ENCODE measurements at regions of chr10 and their contacts with region 1.

Region 1: DNA sequence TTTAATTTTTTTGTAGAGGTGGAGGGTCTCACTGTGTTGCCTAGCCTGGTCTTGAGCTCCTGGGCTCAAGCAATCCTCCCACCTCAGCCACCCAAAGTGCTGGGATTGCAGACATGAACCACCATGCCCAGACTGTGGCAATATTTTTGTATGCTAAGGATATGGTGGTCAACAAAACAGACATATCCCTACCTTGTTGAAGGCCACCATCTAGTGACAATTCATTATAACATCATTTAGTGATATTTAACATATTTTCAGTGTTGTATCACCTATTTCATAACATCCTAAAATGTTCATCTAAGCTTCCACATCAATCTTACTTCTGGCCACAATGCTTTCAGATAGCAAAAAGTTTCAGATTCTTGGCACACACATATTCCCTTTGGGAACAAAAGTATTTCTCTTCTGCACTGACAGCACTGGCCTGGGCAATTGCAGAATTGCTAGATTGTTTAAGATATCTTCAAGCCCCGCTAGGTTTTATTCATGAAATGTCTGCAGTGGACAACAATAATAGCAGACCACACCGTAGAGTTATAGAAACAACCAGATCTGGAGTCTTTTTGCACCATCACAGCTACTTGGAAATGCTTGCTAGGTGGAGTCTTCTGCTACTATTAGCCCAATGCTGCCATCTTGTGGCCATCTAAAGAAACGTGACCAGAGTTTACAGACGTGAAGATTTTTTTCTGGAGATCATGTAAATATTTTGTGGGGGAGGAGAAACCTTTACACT is 58.4 kb downstream of the DNAJC12 start:
- DNase-seq: peak; percentile 86
- ATAC-seq: peak; percentile 75
- H3K4me3 Mint-ChIP-seq: no peak overlapping the region
- H3K27ac Mint-ChIP-seq: no peak overlapping the region
- H3K4me1 Mint-ChIP-seq: peaks cover 46% of the 10 kb centered on the region
- H3K27me3 Mint-ChIP-seq: no peaks in the 10 kb centered on the region

Region 2: GRCh38 chr10:67612577-67613537 is 166.8 kb before region 1 on chr10:
- CTCF ChIA-PET with region 1: interaction called, 13 read pairs
- POLR2A ChIA-PET with region 1: no interaction called
- DNase-seq: peak; percentile 81
- ATAC-seq: peak; percentile 99
- H3K4me3 Mint-ChIP-seq: peak overlapping the region; percentile 45
- H3K27ac Mint-ChIP-seq: peak overlapping the region; percentile 82
- H3K4me1 Mint-ChIP-seq: peaks cover 24% of the 10 kb centered on the region
- H3K27me3 Mint-ChIP-seq: peaks cover 16% of the 10 kb centered on the region

Region 3: GRCh38 chr10:67666416-67667034 is 113.1 kb before region 1 on chr10:
- CTCF ChIA-PET with region 1: interaction called, 107 read pairs
- POLR2A ChIA-PET with region 1: no interaction called
- DNase-seq: no peak
- ATAC-seq: no peak
- H3K4me3 Mint-ChIP-seq: no peak overlapping the region
- H3K27ac Mint-ChIP-seq: no peak overlapping the region
- H3K4me1 Mint-ChIP-seq: no peaks in the 10 kb centered on the region
- H3K27me3 Mint-ChIP-seq: peaks cover 3% of the 10 kb centered on the region

Region 4: GRCh38 chr10:67705921-67706320 is 73.7 kb before region 1 on chr10:
- CTCF ChIA-PET with region 1: interaction called, 18 read pairs
- POLR2A ChIA-PET with region 1: no interaction called
- DNase-seq: no peak
- ATAC-seq: no peak
- H3K4me3 Mint-ChIP-seq: no peak overlapping the region
- H3K27ac Mint-ChIP-seq: no peak overlapping the region
- H3K4me1 Mint-ChIP-seq: no peaks in the 10 kb centered on the region
- H3K27me3 Mint-ChIP-seq: peaks cover 22% of the 10 kb centered on the region

Region 5: GRCh38 chr10:67764012-67764822 is 15.4 kb before region 1 on chr10:
- CTCF ChIA-PET with region 1: interaction called, 98 read pairs
- POLR2A ChIA-PET with region 1: interaction called, 13 read pairs
- DNase-seq: peak; percentile 97
- ATAC-seq: peak; percentile 85
- H3K4me3 Mint-ChIP-seq: peak overlapping the region; percentile 86
- H3K27ac Mint-ChIP-seq: peak overlapping the region; percentile 98
- H3K4me1 Mint-ChIP-seq: peaks cover 31% of the 10 kb centered on the region
- H3K27me3 Mint-ChIP-seq: peaks cover 2% of the 10 kb centered on the region